GM13976 (cell line): ENCODE measurements at regions of chr4 and their contacts with region 1.

Region 1: DNA sequence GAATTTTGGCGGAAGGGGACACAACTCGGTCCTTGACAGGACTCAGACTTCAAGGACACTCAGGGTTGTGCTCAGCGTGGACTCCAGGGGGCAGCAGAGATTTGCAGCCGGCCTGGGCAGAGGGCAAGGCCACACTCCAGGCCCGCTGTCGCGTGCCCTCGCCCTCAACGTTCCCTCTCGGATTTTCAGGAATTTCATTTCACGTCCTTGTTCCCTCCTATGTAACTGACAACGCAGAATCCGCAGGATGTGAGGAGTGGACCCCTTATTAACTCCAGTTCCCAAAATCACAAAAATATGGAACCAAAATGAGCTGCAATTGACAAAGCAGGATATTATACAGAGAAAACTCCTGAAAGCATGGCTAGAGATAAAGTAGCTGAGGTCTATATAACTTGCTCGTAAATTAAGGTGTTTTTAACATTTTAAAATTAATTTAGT is 21.0 kb upstream of the DCTD start:
- DNase-seq: peak; percentile 80
- CTCF ChIP-seq: peak; percentile 94

Region 2: DNA sequence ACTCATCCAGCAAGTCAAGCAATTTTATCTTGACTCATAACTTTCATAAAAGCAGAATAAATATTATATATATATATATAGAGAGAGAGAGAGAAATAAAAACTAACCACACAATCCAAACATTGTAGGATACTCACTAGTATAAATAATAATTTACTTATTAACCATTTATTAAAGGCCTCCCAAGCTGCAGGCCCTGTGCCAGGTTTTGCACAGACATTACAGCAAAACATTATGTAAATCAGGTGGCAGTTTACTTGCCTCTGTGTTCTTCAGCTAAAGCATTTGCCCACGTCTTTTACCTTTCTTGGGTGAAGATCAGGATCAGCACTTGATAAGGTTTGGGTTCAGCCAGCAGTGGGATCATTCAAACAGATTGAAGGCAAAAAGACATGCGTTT is 306.3 kb after region 1 on chr4:
- in situ Hi-C with region 1: no loop called
- DNase-seq: no peak
- CTCF ChIP-seq: no peak

Region 3: GRCh38 chr4:183256756-183257385 is 318.6 kb after region 1 on chr4:
- in situ Hi-C with region 1: loop called (anchors 10 kb)
- DNase-seq: peak; percentile 61
- CTCF ChIP-seq: peak; percentile 61